ENCODE measurements at regions of chr19 and their contacts with region 1.

Region 1: GRCh38 chr19:10095948-10096621 is 6.4 kb downstream of the ANGPTL6 start:
- DNase-seq: no peak
- ATAC-seq: peak; percentile 91
- H3K4me3 ChIP-seq: peak overlapping the region; percentile 41 to 61
- H3K27ac ChIP-seq: peak overlapping the region; percentile 77
- H3K4me1 ChIP-seq: no peaks in the 10 kb centered on the region
- H3K27me3 ChIP-seq: no peaks in the 10 kb centered on the region
- CTCF ChIP-seq: no peak

Region 2: DNA sequence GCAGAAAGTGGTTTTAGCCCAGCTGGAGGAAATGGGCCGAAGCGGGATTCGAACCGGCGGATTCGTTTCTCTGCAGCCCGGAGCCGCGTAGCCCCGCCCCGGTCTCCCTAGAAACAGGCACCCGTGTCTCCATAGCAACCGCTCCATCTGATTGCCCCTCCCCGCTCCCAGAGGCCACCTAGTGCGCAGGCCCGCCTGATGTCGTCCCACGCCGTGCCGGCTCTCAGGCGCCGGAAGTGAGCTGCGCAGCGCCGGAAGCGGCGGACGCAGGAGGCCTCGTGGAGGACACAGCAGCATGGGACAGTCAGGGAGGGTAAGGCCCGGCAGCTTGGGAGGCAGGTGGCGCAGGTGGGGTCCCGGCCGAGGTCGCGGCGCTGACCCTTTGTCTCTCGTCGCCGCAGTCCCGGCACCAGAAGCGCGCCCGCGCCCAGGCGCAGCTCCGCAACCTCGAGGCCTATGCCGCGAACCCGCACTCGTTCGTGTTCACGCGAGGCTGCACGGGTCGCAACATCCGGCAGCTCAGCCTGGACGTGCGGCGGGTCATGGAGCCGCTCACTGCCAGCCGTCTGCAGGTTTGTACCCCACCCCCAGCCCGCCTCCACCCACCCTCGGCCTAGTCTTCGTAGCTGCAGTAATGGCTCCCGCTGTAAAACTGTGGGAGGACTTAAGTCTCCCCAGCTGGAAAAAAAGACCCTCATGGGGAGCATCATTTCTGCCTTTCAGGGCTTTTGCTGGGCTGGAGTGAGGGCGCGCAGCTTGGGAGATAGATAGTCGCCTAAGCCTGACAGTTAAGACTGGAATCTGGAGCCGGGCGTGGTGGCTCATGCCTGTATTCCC is 10.2 kb after region 1 on chr19 and contains the start of gene PPAN:
- CTCF ChIA-PET with region 1: interaction called, 15 read pairs
- POLR2A ChIA-PET with region 1: interaction called, 7 read pairs
- in situ Hi-C with region 1: no loop called
- intact Hi-C with region 1: no loop called
- DNase-seq: peak; percentile 76
- ATAC-seq: peak; percentile 98
- H3K4me3 ChIP-seq: peak within 1 kb of the TSS; percentile 82 to 94
- H3K27ac ChIP-seq: peak within 1 kb of the TSS; percentile 90
- H3K4me1 ChIP-seq: peaks cover under 1% of the 10 kb centered on the region
- H3K27me3 ChIP-seq: no peaks in the 10 kb centered on the region
- CTCF ChIP-seq: no peak
- total RNA-seq, gene PPAN: 63.3 TPM

Region 3: GRCh38 chr19:10120538-10121189 is 24.6 kb after region 1 on chr19:
- CTCF ChIA-PET with region 1: interaction called, 10 read pairs
- POLR2A ChIA-PET with region 1: no interaction called
- in situ Hi-C with region 1: no loop called
- intact Hi-C with region 1: no loop called
- DNase-seq: no peak
- ATAC-seq: no peak
- H3K4me3 ChIP-seq: no peak overlapping the region
- H3K27ac ChIP-seq: no peak overlapping the region
- H3K4me1 ChIP-seq: no peaks in the 10 kb centered on the region; the same call in 1 of the 2 replicates
- H3K27me3 ChIP-seq: no peaks in the 10 kb centered on the region
- CTCF ChIP-seq: no peak

Region 4: DNA sequence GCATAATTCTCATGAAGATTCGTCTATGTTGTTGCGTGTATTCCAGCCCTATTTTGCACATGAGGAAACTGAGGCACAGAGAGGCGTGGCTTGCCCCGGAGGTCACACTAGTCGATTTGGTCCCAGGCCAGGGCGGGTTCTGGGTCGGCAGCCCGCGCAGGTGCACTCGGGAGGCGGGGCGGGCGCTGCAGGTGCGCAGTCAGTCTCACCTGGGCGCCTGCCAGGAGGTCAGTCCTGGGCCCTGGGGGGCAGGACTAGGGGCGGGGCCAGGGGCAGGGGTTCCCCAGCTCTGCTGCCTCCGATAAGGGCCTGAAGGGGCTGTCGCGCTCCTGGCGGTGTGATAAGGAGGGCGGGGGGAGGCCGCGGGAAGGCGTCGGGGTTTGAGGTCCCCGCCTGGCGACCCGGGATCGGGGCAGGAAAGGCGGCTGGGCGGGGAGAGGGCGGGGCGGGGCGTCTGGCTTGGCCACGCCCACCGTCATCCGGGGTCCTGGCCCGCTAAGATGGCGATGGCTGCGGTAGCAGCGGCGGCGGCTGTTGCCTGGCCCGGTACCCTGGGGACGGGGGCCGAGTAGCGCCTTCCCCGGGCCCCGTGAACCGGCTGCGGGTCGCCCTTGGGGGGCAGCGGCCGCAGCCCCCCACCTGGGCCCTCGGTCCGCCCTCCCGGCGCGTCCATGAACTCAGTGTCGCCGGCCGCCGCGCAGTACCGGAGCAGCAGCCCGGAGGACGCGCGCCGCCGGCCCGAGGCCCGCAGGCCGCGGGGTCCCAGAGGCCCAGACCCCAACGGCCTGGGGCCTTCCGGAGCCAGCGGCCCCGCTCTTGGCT is 447.5 kb after region 1 on chr19 and contains the start of gene ATG4D:
- CTCF ChIA-PET with region 1: interaction called, 21 read pairs
- POLR2A ChIA-PET with region 1: no interaction called
- in situ Hi-C with region 1: no loop called
- intact Hi-C with region 1: no loop called
- DNase-seq: no peak
- ATAC-seq: peak; percentile 91
- H3K4me3 ChIP-seq: peak within 1 kb of the TSS; percentile 59 to 77
- H3K27ac ChIP-seq: peak within 1 kb of the TSS; percentile 69
- H3K4me1 ChIP-seq: no peaks in the 10 kb centered on the region
- H3K27me3 ChIP-seq: no peaks in the 10 kb centered on the region
- CTCF ChIP-seq: no peak
- total RNA-seq, gene ATG4D: 28.0 TPM